ENCODE measurements at regions of chr9 and their contacts with region 1.

Region 1: GRCh38 chr9:5832543-5833529 is at the start of gene ERMP1:
- DNase-seq: peak; percentile 85 to 95 (median 92)
- ATAC-seq: peak; percentile 87
- H3K4me3 ChIP-seq: peak within 1 kb of the TSS; percentile 57 to 91
- H3K4me3 Mint-ChIP-seq: peak within 1 kb of the TSS; percentile 96
- H3K27ac ChIP-seq: peak within 1 kb of the TSS in 1 of 2 experiments; percentile 41
- H3K27ac Mint-ChIP-seq: peak within 1 kb of the TSS; percentile 88
- H3K4me1 ChIP-seq: peaks cover 34% of the 10 kb centered on the region
- H3K4me1 Mint-ChIP-seq: peaks cover 66% of the 10 kb centered on the region
- H3K27me3 ChIP-seq: no peaks in the 10 kb centered on the region
- H3K27me3 Mint-ChIP-seq: no peaks in the 10 kb centered on the region
- CTCF ChIP-seq: peak; percentile 83
- total RNA-seq, gene ERMP1: 5.2 to 7.9 TPM

Region 2: GRCh38 chr9:5089737-5090136 is 743.1 kb before region 1 on chr9:
- CTCF ChIA-PET with region 1: no interaction called
- POLR2A ChIA-PET with region 1: no interaction called
- intact Hi-C with region 1: no loop called
- DNase-seq: no peak
- ATAC-seq: no peak
- H3K4me3 ChIP-seq: no peak overlapping the region
- H3K4me3 Mint-ChIP-seq: no peak overlapping the region
- H3K27ac ChIP-seq: no peak overlapping the region
- H3K27ac Mint-ChIP-seq: no peak overlapping the region
- H3K4me1 ChIP-seq: no peaks in the 10 kb centered on the region
- H3K4me1 Mint-ChIP-seq: no peaks in the 10 kb centered on the region
- H3K27me3 ChIP-seq: no peaks in the 10 kb centered on the region
- H3K27me3 Mint-ChIP-seq: no peaks in the 10 kb centered on the region
- CTCF ChIP-seq: no peak

Region 3: DNA sequence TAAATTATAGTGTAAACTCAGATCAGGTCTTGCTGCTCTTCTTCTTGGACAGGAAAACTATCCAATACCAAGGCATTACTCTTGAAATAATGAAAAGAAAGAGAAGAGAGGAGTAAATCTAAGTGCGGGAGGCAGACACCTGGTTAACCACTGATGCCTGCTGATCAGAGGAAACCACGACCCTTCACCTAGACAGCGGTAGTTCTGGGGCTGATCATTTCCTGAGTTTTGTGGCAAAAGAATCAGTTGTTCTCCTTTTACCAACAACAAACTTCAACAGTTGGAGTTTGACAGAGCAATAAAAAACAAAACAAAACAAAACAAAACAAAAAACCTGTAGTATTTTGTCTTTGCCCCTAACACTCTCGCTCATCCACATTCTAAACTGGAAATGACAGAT is 496.1 kb before region 1 on chr9:
- CTCF ChIA-PET with region 1: no interaction called
- POLR2A ChIA-PET with region 1: no interaction called
- intact Hi-C with region 1: loop called in 1 of 2 experiments (anchors 10 kb)
- DNase-seq: peak in 5 of 9 experiments; percentile 23 to 69 (median 47)
- ATAC-seq: peak; percentile 19
- H3K4me3 ChIP-seq: peak overlapping the region; percentile 2 to 31
- H3K4me3 Mint-ChIP-seq: peak overlapping the region; percentile 71
- H3K27ac ChIP-seq: peak overlapping the region; percentile 28 to 30
- H3K27ac Mint-ChIP-seq: peak overlapping the region; percentile 89
- H3K4me1 ChIP-seq: peaks cover 27% of the 10 kb centered on the region
- H3K4me1 Mint-ChIP-seq: peaks cover 54% of the 10 kb centered on the region
- H3K27me3 ChIP-seq: no peaks in the 10 kb centered on the region
- H3K27me3 Mint-ChIP-seq: no peaks in the 10 kb centered on the region
- CTCF ChIP-seq: no peak

Region 4: DNA sequence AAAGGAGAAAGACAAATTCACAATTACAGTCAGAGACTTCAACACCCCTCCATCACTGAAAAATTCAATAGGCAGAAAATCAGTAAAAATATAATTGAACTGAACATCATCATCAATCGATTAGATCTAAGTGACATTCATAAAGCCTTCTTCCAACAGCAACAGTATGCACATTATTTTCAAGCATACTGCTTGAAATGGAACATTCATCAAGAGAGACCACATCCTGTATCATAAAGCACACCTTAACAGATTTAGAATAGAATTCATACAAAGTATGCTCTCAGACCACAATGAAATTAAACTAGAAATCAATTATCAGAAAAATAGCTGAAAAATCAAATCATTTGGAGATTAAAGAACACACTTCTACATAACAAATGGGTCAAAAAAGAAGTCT is 39.0 kb before region 1 on chr9:
- CTCF ChIA-PET with region 1: interaction called, 10 read pairs
- POLR2A ChIA-PET with region 1: interaction called, 5 read pairs
- intact Hi-C with region 1: no loop called
- DNase-seq: peak in 1 of 9 experiments; percentile 13
- ATAC-seq: peak; percentile 55
- H3K4me3 ChIP-seq: no peak overlapping the region
- H3K4me3 Mint-ChIP-seq: peak overlapping the region; percentile 27
- H3K27ac ChIP-seq: no peak overlapping the region
- H3K27ac Mint-ChIP-seq: peak overlapping the region; percentile 2
- H3K4me1 ChIP-seq: peaks cover 16% of the 10 kb centered on the region
- H3K4me1 Mint-ChIP-seq: peaks cover 51% of the 10 kb centered on the region
- H3K27me3 ChIP-seq: no peaks in the 10 kb centered on the region
- H3K27me3 Mint-ChIP-seq: no peaks in the 10 kb centered on the region
- CTCF ChIP-seq: no peak

Region 5: DNA sequence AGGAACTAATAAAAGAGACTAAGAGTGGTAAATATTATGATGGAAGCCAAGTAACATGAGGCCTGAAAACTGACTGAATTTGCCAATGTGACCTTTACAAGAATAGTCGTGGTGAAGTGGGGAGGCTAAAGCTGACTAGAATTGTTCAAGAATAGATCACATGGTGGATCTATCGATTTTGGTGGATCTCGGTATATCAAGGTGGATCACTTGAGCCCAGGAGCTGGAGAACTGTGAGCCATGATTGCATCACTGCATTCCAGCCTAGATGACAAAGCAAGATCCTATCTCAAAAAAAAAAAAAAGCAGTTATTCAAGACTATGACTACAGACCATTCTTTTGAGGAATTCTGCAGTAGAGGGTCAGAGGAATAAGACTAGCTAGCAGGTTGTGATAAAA is 15.0 kb before region 1 on chr9:
- CTCF ChIA-PET with region 1: interaction called, 28 read pairs
- POLR2A ChIA-PET with region 1: interaction called, 9 read pairs
- intact Hi-C with region 1: no loop called
- DNase-seq: no peak
- ATAC-seq: no peak
- H3K4me3 ChIP-seq: no peak overlapping the region
- H3K4me3 Mint-ChIP-seq: no peak overlapping the region
- H3K27ac ChIP-seq: no peak overlapping the region
- H3K27ac Mint-ChIP-seq: no peak overlapping the region
- H3K4me1 ChIP-seq: no peaks in the 10 kb centered on the region
- H3K4me1 Mint-ChIP-seq: peaks cover 14% of the 10 kb centered on the region
- H3K27me3 ChIP-seq: no peaks in the 10 kb centered on the region
- H3K27me3 Mint-ChIP-seq: no peaks in the 10 kb centered on the region
- CTCF ChIP-seq: no peak

Region 6: DNA sequence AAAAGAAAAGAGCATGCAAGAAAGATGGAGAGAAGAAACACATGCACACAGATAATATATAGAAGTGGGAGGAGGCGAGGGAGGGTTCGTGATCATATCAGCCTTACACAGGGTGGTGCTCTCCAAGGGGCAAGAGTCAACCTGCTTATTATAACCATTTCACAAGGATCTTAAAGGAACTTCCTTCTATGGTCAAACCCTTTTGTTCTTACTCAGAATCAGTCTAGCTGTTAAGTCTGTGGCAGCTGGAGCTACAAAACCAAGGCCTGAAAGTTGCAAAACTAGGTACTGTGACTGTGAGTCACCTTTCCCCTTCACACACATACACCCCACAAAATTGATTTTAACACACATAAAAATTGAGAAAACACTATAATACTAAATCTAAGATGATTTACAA is 18.6 kb after region 1 on chr9:
- CTCF ChIA-PET with region 1: interaction called, 10 read pairs
- POLR2A ChIA-PET with region 1: interaction called, 6 read pairs
- intact Hi-C with region 1: loop called in 1 of 2 experiments (anchors 2 kb)
- DNase-seq: peak in 7 of 9 experiments; percentile 17 to 67 (median 39)
- ATAC-seq: peak; percentile 86
- H3K4me3 ChIP-seq: no peak overlapping the region
- H3K4me3 Mint-ChIP-seq: no peak overlapping the region
- H3K27ac ChIP-seq: peak overlapping the region in 1 of 2 experiments; percentile 34
- H3K27ac Mint-ChIP-seq: peak overlapping the region; percentile 19
- H3K4me1 ChIP-seq: peaks cover 13% of the 10 kb centered on the region
- H3K4me1 Mint-ChIP-seq: peaks cover 32% of the 10 kb centered on the region
- H3K27me3 ChIP-seq: no peaks in the 10 kb centered on the region
- H3K27me3 Mint-ChIP-seq: no peaks in the 10 kb centered on the region
- CTCF ChIP-seq: no peak